CD8-positive, alpha-beta T cell (primary cell): ENCODE measurements at regions of chr19 and their contacts with region 1.

Region 1: GRCh38 chr19:58475714-58476497 is at the start of gene ZNF446:
- DNase-seq: peak; percentile 92 to 99 (median 97)
- ATAC-seq: peak; percentile 82
- H3K4me3 ChIP-seq: peak within 1 kb of the TSS; percentile 56 to 72
- H3K4me3 Mint-ChIP-seq: peak within 1 kb of the TSS; percentile 92
- H3K27ac ChIP-seq: peak within 1 kb of the TSS; percentile 75 to 95
- H3K27ac Mint-ChIP-seq: peak within 1 kb of the TSS; percentile 97
- H3K4me1 ChIP-seq: peaks cover 17% of the 10 kb centered on the region
- H3K4me1 Mint-ChIP-seq: peaks cover 16% of the 10 kb centered on the region
- H3K27me3 ChIP-seq: no peaks in the 10 kb centered on the region
- H3K27me3 Mint-ChIP-seq: no peaks in the 10 kb centered on the region
- CTCF ChIP-seq: no peak
- total RNA-seq, gene ZNF446: 14.6 to 16.5 TPM

Region 2: GRCh38 chr19:58326914-58327726 is 148.8 kb before region 1 on chr19 and contains the start of gene ZSCAN22:
- CTCF ChIA-PET with region 1: no interaction called
- POLR2A ChIA-PET with region 1: no interaction called
- intact Hi-C with region 1: loop called in 1 of 2 experiments (anchors 5 kb)
- DNase-seq: peak; percentile 76 to 94 (median 89)
- ATAC-seq: peak; percentile 78
- H3K4me3 ChIP-seq: peak within 1 kb of the TSS; percentile 84 to 96
- H3K4me3 Mint-ChIP-seq: no peak within 1 kb of the TSS
- H3K27ac ChIP-seq: peak within 1 kb of the TSS; percentile 77 to 96
- H3K27ac Mint-ChIP-seq: no peak within 1 kb of the TSS
- H3K4me1 ChIP-seq: peaks cover 19% of the 10 kb centered on the region
- H3K4me1 Mint-ChIP-seq: peaks cover 3% of the 10 kb centered on the region
- H3K27me3 ChIP-seq: no peaks in the 10 kb centered on the region
- H3K27me3 Mint-ChIP-seq: no peaks in the 10 kb centered on the region
- CTCF ChIP-seq: no peak
- total RNA-seq, gene ZSCAN22: 1.7 to 2.2 TPM

Region 3: DNA sequence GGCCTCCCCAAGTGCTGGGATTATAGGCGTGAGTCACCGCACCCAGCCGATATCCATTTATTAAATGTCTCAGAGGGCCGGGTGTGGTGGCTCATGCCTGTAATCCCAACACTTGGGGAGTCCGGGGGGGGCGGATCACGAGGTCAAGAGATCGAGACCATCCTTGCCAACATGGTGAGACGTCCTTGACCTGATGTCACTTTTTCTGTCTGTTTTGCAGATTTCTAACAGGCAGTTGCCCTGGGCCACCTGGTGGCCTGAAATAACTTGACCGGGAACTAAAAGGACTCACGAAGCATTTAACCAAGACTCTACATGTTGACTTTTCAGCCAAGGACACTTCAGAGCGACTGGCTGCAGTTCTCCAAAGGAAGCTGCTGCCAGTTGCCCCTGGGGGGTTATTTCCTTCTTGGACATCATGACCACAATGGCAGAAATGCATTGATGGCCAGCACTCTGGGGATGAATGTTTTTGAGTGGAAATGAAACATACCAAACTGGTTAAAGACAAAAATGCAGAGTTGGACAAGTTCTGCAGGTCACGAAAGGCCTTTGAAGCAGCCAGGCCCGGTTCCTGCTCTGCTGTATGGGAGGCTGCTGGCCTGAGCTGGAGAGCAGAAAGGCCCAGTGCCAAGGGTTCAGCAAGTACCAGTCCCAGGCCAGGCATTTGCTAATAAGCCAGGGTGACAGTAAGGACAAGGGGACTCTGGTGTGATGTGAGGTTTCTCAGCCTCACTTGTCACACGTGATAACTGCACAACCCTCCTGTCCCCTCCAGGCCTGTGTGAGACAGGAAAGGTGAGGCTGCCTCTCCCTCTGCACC is 103.4 kb before region 1 on chr19:
- CTCF ChIA-PET with region 1: no interaction called
- POLR2A ChIA-PET with region 1: no interaction called
- intact Hi-C with region 1: no loop called
- DNase-seq: no peak
- ATAC-seq: no peak
- H3K4me3 ChIP-seq: no peak overlapping the region
- H3K4me3 Mint-ChIP-seq: no peak overlapping the region
- H3K27ac ChIP-seq: no peak overlapping the region
- H3K27ac Mint-ChIP-seq: no peak overlapping the region
- H3K4me1 ChIP-seq: no peaks in the 10 kb centered on the region
- H3K4me1 Mint-ChIP-seq: peaks cover under 1% of the 10 kb centered on the region
- H3K27me3 ChIP-seq: no peaks in the 10 kb centered on the region
- H3K27me3 Mint-ChIP-seq: no peaks in the 10 kb centered on the region
- CTCF ChIP-seq: no peak

Region 4: DNA sequence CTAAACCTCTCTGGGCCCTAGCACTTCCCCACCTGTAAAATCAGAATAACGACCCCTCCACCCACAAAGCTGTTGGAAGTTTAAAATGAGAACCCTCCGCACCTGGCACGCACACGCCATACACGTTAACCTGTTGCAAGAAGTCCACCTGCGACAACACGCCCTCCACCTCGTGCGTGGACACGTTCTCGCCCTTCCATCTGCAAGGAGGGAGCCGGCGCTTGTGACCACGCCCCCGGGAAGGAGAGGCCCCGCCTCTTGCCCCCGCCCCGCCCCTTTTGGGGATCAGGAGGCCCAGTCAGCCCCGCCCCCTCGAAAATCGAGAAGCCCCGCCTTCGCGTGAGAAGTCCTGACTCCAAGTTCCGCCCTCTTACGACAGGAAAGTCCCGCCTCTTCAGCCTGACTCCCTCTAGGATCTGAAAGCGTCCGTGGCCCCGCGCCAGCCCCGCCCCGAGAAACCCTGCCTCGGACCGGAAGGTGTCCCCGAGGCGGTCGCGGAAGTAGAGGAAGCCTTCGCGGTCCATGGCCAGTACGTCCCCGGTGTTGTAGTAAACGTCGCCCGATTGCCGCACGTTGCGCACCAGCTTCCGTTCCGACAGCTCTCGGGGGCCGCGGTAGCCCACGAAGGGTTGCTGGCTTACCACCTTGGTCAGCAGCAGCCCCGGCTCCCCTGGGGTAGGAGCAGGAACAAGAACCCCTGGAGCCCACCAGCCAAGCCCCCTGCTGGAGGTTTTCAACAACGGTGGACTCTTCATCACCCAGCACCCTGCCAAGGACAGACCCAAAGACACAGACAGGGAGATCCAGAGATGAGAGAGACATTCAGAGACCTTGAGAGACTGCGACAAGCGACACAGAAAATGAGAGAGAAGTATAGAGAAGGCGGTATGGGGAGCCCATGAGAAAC is 23.4 kb after region 1 on chr19:
- CTCF ChIA-PET with region 1: no interaction called
- POLR2A ChIA-PET with region 1: interaction called, 3 read pairs
- intact Hi-C with region 1: loop called (anchors 1 kb)
- DNase-seq: peak; percentile 83 to 97 (median 95)
- ATAC-seq: peak; percentile 86
- H3K4me3 ChIP-seq: peak overlapping the region; percentile 64
- H3K4me3 Mint-ChIP-seq: peak overlapping the region; percentile 92
- H3K27ac ChIP-seq: peak overlapping the region; percentile 22 to 88
- H3K27ac Mint-ChIP-seq: peak overlapping the region; percentile 96
- H3K4me1 ChIP-seq: peaks cover 17% of the 10 kb centered on the region
- H3K4me1 Mint-ChIP-seq: peaks cover 25% of the 10 kb centered on the region
- H3K27me3 ChIP-seq: no peaks in the 10 kb centered on the region
- H3K27me3 Mint-ChIP-seq: no peaks in the 10 kb centered on the region
- CTCF ChIP-seq: no peak

Region 5: GRCh38 chr19:58543826-58544590 is 68.1 kb after region 1 on chr19 and contains the start of gene TRIM28:
- CTCF ChIA-PET with region 1: no interaction called
- POLR2A ChIA-PET with region 1: no interaction called
- intact Hi-C with region 1: loop called (anchors 1 kb)
- DNase-seq: peak; percentile 99 to 100 (median 100)
- ATAC-seq: peak; percentile 85
- H3K4me3 ChIP-seq: peak within 1 kb of the TSS; percentile 68 to 71
- H3K4me3 Mint-ChIP-seq: peak within 1 kb of the TSS; percentile 93
- H3K27ac ChIP-seq: peak within 1 kb of the TSS; percentile 90 to 93
- H3K27ac Mint-ChIP-seq: peak within 1 kb of the TSS; percentile 99
- H3K4me1 ChIP-seq: peaks cover 17% of the 10 kb centered on the region
- H3K4me1 Mint-ChIP-seq: peaks cover 24% of the 10 kb centered on the region
- H3K27me3 ChIP-seq: peaks cover 0 to 13% of the 10 kb centered on the region in 2 experiments
- H3K27me3 Mint-ChIP-seq: peaks cover 10% of the 10 kb centered on the region
- CTCF ChIP-seq: no peak
- total RNA-seq, gene TRIM28: 525 to 549 TPM